ENCODE measurements at regions of chr16 and their contacts with region 1.

Region 1: GRCh38 chr16:30692381-30693064 is 6.4 kb upstream of the SRCAP start:
- DNase-seq: no peak
- H3K4me3 ChIP-seq: no peak overlapping the region
- H3K27ac ChIP-seq: no peak overlapping the region
- H3K4me1 ChIP-seq: peaks cover 5% of the 10 kb centered on the region
- H3K27me3 ChIP-seq: no peaks in the 10 kb centered on the region
- CTCF ChIP-seq: no peak

Region 2: DNA sequence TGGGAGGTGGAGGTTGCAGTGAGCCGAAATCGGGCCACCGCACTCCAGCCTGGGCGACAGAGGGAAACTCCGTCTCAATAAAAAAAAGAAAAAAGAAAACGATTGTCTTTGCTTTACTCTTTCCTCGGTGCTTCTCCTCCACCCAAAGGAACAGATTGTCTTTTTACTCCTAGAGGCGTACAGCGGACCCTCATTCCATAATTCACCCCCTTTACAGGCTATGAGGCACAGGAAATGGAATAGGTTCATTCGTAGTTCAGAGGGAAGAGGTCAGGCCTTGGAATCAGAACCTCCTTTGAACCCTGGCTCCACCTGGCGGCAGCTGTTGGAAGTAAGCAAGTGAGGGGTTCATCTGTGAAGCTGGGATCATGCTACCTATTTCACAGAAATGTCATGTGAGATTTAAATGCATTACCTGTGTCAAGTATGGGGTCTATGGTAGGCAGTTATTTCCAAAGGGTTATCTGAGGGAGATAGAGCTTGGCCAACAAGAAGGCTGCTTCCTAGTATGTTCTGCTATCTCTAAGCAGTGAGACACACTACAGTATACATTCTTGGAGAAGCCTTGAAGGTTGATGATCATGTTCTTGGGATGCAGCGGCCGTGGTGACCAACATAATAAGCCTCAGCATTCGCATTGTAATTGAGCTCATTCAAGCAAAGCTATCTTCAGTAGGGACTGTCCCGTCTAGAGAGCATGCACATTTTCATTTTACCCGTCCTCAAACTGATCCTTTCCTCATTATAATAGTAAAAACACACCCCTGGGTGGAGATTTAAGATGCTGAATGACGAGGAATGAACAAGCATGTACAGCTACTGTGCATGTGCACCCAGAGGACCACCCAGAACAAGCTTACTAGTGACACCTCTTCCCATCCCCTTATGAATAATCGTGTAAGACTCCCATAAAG is 63.6 kb before region 1 on chr16:
- CTCF ChIA-PET with region 1: no interaction called
- dilution Hi-C with region 1: no loop called
- in situ Hi-C with region 1: no loop called
- intact Hi-C with region 1: no loop called
- DNase-seq: peak; percentile 46
- H3K4me3 ChIP-seq: no peak overlapping the region
- H3K27ac ChIP-seq: no peak overlapping the region
- H3K4me1 ChIP-seq: peaks cover 5% of the 10 kb centered on the region
- H3K27me3 ChIP-seq: no peaks in the 10 kb centered on the region
- CTCF ChIP-seq: peak; percentile 97 to 98

Region 3: DNA sequence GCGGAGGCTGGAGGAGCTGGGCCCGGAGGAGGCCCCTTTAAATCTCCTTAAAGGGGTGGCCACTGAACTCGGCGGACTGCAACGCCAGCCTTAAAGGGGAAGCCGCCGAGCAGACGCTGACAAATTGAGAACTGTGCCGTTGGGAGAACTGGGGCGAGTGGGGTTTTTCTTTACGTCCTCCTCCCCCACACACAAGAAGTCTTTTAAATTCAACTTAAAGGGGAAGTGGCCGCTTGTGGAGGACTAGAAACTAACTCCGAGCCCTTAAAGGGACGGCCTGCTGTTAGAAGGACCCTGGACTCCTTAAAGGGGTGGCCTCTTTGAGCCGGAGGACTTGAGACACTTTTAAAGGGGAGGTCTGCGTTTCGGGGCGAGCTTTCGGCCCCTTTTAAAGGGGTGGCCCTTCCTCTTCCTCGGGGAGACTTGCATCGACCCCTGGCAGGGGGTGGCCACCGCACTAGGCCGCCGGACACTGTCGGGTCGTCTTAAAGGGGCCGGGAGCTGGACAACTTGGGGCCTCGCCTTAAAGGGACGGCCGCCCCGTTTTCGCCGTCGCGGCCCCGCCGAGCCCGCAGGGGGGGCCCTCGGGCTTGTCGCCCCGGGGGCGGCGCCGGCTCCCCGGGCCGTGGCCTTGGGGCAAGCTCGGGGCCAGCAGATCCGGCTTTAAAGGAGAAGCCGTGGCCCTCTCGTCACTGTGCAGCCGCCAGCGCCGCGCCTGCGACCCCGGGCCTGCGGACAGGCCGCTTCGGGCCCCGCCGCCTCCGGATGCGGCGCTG is 33.6 kb before region 1 on chr16:
- CTCF ChIA-PET with region 1: interaction called, 4 read pairs
- dilution Hi-C with region 1: no loop called
- in situ Hi-C with region 1: no loop called
- intact Hi-C with region 1: loop called (anchors 1 kb)
- DNase-seq: peak; percentile 97
- H3K4me3 ChIP-seq: peak overlapping the region; percentile 49 to 80 (median 65)
- H3K27ac ChIP-seq: peak overlapping the region; percentile 94
- H3K4me1 ChIP-seq: peaks cover 24% of the 10 kb centered on the region
- H3K27me3 ChIP-seq: no peaks in the 10 kb centered on the region
- CTCF ChIP-seq: no peak

Region 4: GRCh38 chr16:30669896-30670797 is 22.4 kb before region 1 on chr16:
- CTCF ChIA-PET with region 1: no interaction called
- dilution Hi-C with region 1: no loop called
- in situ Hi-C with region 1: no loop called
- intact Hi-C with region 1: no loop called
- DNase-seq: no peak
- H3K4me3 ChIP-seq: no peak overlapping the region
- H3K27ac ChIP-seq: no peak overlapping the region
- H3K4me1 ChIP-seq: no peaks in the 10 kb centered on the region
- H3K27me3 ChIP-seq: no peaks in the 10 kb centered on the region
- CTCF ChIP-seq: no peak

Region 5: GRCh38 chr16:30724641-30725417 is 32.3 kb after region 1 on chr16:
- CTCF ChIA-PET with region 1: no interaction called
- dilution Hi-C with region 1: loop called (anchors 5 kb)
- in situ Hi-C with region 1: no loop called
- intact Hi-C with region 1: no loop called
- DNase-seq: no peak
- H3K4me3 ChIP-seq: no peak overlapping the region
- H3K27ac ChIP-seq: no peak overlapping the region
- H3K4me1 ChIP-seq: no peaks in the 10 kb centered on the region
- H3K27me3 ChIP-seq: no peaks in the 10 kb centered on the region
- CTCF ChIP-seq: no peak